ENCODE measurements at regions of chr4 and their contacts with region 1.

Region 1: DNA sequence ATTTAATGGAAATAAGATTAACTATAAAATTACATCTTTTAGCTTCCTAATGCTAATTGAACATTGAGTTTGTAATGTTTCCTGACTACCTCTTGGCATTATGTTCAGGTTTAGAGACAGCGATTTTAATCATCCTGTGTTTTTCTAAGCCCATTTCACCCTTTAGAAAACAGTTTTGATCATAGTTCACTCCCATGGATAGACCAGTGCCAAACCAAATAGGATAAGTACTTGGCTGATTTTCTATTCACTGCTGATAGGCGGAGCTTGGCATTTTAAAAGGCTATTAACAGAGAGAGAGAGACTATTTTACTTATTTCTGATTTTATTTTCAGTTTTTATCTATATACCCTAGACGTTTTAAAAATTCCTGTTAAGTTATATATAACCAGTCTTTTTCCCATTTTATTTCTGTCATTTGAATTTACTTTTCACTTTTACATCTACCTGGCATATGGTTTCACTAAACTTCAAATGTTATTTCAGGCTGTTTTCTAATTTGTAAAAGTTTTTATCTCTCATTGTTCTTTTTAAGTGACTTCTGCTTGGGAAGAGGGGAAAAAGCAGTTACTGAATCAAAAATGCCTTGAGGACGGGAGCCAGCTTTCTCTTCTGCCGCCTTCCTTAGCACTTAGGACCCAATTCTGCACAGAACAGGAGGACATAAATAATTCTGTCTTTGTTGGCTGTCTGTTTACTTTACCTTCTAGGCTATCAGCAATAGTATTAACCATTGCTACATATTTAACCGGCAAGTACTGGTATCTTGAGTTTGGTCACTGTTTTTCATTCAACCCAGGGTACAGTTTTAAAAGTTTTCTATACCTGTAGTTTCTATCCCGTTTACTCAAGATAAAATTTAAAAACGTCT is 46.4 kb downstream of the SGMS2 start:
- DNase-seq: no peak
- ATAC-seq: no peak
- H3K4me3 ChIP-seq: no peak overlapping the region
- H3K27ac ChIP-seq: no peak overlapping the region
- H3K4me1 ChIP-seq: no peaks in the 10 kb centered on the region
- H3K27me3 ChIP-seq: no peaks in the 10 kb centered on the region
- CTCF ChIP-seq: no peak

Region 2: GRCh38 chr4:107793996-107794395 is 77.2 kb before region 1 on chr4:
- intact Hi-C with region 1: loop called in 1 of 2 experiments (anchors 2 kb)
- DNase-seq: no peak
- ATAC-seq: no peak
- H3K4me3 ChIP-seq: no peak overlapping the region
- H3K27ac ChIP-seq: no peak overlapping the region
- H3K4me1 ChIP-seq: no peaks in the 10 kb centered on the region
- H3K27me3 ChIP-seq: peaks cover 0 to 8% (median 0%) of the 10 kb centered on the region in 3 donors
- CTCF ChIP-seq: no peak

Region 3: DNA sequence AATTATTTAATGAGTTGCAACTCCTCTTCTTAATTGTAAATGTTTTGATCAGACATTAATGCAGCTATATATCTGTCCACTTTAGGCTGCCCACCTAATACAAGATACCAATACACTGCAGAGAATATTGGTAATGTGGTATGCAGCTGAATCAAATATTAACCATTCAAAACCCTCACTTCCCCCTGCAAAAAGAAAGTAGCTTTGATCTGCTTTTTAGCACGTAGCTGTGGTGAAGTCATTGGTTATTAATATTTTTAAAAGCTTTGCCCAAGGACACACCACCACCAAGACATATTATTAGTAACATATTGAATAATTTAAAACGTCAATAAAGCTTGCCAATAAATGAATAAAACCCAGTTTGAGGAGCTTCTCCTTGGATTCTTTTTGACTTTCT is 31.6 kb after region 1 on chr4:
- intact Hi-C with region 1: no loop called
- DNase-seq: no peak
- ATAC-seq: no peak
- H3K4me3 ChIP-seq: no peak overlapping the region
- H3K27ac ChIP-seq: no peak overlapping the region
- H3K4me1 ChIP-seq: peaks cover 14% of the 10 kb centered on the region
- H3K27me3 ChIP-seq: no peaks in the 10 kb centered on the region
- CTCF ChIP-seq: no peak